SK-N-SH (cell line): ENCODE measurements at regions of chr11 and their contacts with region 1.

Region 1: DNA sequence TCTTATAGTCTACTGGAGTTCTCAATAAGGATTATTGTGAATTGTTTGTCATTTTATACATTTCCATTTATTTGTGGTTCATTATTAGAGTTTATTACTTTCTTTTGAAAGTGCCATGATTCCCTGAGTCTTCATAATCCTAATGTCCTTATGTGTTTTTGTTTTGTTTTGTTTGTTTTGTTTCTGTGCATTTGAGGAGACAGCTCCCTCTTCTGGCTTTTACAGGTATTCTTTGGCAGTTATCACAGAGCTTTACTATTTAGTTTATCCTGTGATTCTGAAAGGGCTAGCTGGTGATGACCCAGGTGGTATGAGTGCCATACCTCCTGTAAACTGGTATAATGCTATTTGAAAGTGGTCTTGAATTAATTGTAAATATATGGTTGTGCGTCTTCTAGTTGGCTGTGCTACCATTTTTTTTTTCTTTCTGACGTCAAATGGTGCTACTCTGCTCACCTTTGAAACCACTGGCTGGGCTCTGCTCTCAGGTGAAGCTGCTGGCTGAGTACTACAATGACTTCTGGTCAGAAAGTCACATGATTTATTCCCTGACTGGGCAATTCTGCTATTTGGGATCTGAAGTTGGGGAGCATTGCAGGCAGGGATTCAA is 751.2 kb downstream of the JRKL start:
- DNase-seq: peak; percentile 7
- H3K4me3 ChIP-seq: no peak overlapping the region; a peak in 1 of 4 replicates
- H3K27ac ChIP-seq: no peak overlapping the region
- H3K4me1 ChIP-seq: no peaks in the 10 kb centered on the region
- H3K27me3 ChIP-seq: no peaks in the 10 kb centered on the region
- CTCF ChIP-seq: peak; percentile 58
- EP300 ChIP-seq: no peak
- RAD21 ChIP-seq: peak; percentile 80

Region 2: GRCh38 chr11:96736601-96737000 is 404.4 kb before region 1 on chr11:
- CTCF ChIA-PET with region 1: no interaction called
- POLR2A ChIA-PET with region 1: no interaction called
- DNase-seq: no peak
- H3K4me3 ChIP-seq: no peak overlapping the region
- H3K27ac ChIP-seq: no peak overlapping the region
- H3K4me1 ChIP-seq: no peaks in the 10 kb centered on the region
- H3K27me3 ChIP-seq: no peaks in the 10 kb centered on the region
- CTCF ChIP-seq: no peak
- EP300 ChIP-seq: no peak
- RAD21 ChIP-seq: no peak

Region 3: GRCh38 chr11:96827164-96827563 is 313.8 kb before region 1 on chr11:
- CTCF ChIA-PET with region 1: interaction called, 15 read pairs
- POLR2A ChIA-PET with region 1: no interaction called
- DNase-seq: peak; percentile 1
- H3K4me3 ChIP-seq: no peak overlapping the region
- H3K27ac ChIP-seq: no peak overlapping the region
- H3K4me1 ChIP-seq: no peaks in the 10 kb centered on the region
- H3K27me3 ChIP-seq: no peaks in the 10 kb centered on the region
- CTCF ChIP-seq: peak; percentile 44
- EP300 ChIP-seq: no peak
- RAD21 ChIP-seq: peak; percentile 64